Right ventricle myocardium superior (tissue), 1 donor: ENCODE measurements at regions of chr11 and their contacts with region 1.

Region 1: DNA sequence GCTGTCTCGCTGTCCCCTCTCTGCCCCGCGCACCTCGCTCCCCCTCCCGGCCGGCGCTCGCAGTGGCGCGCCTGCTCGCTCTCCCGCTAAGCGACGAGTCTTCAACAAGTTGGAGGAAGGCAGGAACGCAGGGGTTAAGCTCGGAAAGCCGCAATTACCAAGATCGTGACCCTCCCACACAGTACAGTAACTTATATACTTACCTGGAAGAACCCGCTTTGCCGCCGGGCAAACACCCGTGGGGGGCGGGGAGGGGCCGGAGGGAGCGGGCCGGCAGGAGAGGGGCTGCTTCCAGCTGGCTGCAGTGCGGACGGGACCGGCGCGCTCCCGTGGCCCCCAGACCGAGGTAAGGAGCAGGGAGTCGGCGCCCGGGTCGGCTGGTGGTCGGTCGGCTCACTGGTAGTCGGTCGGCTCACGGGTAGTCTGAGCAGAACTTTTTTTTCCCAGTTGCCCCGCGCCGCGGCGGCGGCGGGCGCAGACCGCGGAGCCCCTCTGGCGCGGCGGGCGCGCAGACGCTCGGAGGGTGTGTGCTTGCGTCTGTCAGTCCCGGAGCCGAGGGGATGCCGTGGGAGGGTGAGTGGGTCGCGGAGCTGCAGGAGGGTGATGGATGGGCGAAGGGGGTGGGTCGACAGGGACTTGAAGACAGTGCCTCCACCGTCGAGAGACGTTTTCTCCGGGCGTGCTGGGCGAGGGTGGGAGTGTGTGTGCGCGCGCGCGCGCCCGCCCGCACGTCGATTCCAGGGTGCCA is 101.2 kb upstream of the HSD17B12 start:
- DNase-seq: no peak
- ATAC-seq: peak; percentile 13

Region 2: DNA sequence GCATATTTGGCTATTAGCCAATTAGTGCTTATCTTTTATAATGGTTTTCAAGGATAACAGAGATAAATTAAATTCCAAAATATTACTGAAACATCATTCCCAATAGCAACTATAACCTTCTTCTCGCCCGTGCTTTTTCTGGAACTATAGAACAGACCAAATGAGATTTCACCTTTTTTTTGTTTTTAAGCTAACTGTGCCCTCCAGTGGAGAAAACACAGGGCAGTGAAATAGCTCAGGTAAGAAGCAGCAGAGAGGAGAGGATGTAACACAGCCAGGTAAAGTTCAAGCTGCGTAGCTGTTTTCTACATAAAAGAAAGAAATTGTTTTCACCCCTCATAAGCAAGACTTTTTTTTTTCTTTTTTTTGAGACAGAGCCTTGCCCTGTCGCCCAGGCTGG is 129.4 kb after region 1 on chr11:
- intact Hi-C with region 1: loop called (anchors 10 kb)
- DNase-seq: no peak
- ATAC-seq: no peak